ENCODE measurements at regions of chr5 and their contacts with region 1.

Region 1: DNA sequence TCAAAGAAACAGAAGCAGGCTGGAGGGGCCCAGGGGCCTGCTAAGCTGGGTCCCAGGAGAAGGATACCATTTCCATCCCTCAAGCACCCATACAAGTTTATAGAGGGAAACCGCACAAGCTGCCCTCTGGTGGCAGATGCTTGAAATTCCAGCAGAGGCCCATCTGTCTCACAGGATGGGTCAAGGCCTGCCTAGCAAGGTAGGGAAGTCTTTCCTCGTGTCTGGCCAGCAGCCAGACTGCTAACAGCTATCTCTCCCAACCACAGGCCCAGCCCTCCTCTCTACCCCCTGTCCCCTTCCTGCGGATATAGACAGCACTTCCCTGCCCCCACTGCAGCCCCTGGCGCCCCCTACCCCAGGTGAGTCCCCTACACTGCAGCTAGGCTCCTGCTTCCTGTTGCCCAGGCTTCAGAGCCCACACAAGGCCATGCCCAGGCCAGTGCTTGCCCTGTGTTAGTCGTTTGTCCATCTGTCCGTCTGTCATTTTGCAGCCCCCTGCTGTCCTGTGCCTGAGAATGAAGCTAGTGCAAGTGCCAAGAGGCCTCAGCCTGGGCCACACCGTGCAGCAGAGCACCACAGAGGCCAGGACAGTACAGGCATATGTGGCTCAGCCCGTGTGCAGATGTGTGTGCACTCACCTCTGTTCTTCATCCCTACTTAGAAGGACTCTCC is 26.2 kb downstream of the TCF7 start:
- DNase-seq: peak; percentile 75
- ATAC-seq: peak; percentile 53
- H3K4me3 Mint-ChIP-seq: no peak overlapping the region
- H3K27ac Mint-ChIP-seq: no peak overlapping the region
- H3K4me1 Mint-ChIP-seq: peaks cover 32% of the 10 kb centered on the region
- H3K27me3 Mint-ChIP-seq: peaks cover 8% of the 10 kb centered on the region

Region 2: DNA sequence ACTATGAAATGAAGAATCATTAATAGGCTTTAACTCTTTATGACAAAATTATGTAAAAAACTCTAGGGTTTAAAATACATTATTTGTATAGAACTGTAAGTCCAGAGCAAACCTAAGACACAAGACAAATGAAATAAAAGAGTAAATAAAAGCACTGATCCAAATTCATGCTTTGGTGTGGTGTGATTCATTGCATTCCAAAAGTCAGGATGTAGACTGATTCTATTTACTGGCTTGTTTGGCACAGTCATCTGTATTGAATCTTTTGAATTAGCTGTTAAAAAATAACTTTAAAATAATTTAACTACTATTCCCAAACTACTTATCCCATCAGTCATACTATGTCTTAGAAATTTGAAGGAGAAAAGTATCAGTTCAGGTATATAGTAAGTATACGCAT is 1435.8 kb before region 1 on chr5:
- CTCF ChIA-PET with region 1: no interaction called
- DNase-seq: no peak
- ATAC-seq: no peak
- H3K4me3 Mint-ChIP-seq: no peak overlapping the region
- H3K27ac Mint-ChIP-seq: peak overlapping the region; percentile 70
- H3K4me1 Mint-ChIP-seq: peaks cover 27% of the 10 kb centered on the region
- H3K27me3 Mint-ChIP-seq: no peaks in the 10 kb centered on the region

Region 3: GRCh38 chr5:133868946-133869518 is 271.6 kb before region 1 on chr5:
- CTCF ChIA-PET with region 1: no interaction called
- DNase-seq: peak; percentile 86
- ATAC-seq: peak; percentile 81
- H3K4me3 Mint-ChIP-seq: no peak overlapping the region
- H3K27ac Mint-ChIP-seq: no peak overlapping the region
- H3K4me1 Mint-ChIP-seq: peaks cover 7% of the 10 kb centered on the region
- H3K27me3 Mint-ChIP-seq: peaks cover 19% of the 10 kb centered on the region

Region 4: GRCh38 chr5:134113902-134114875 is 26.5 kb before region 1 on chr5 and contains the start of gene TCF7:
- CTCF ChIA-PET with region 1: interaction called, 27 read pairs
- DNase-seq: peak; percentile 63
- ATAC-seq: peak; percentile 85
- H3K4me3 Mint-ChIP-seq: peak within 1 kb of the TSS; percentile 68
- H3K27ac Mint-ChIP-seq: peak within 1 kb of the TSS; percentile 35
- H3K4me1 Mint-ChIP-seq: peaks cover 30% of the 10 kb centered on the region
- H3K27me3 Mint-ChIP-seq: peaks cover 84% of the 10 kb centered on the region
- total RNA-seq, gene TCF7: 7.0 to 7.9 TPM

Region 5: GRCh38 chr5:134119720-134120119 is 20.9 kb before region 1 on chr5:
- CTCF ChIA-PET with region 1: interaction called, 27 read pairs
- DNase-seq: no peak
- ATAC-seq: no peak
- H3K4me3 Mint-ChIP-seq: no peak overlapping the region
- H3K27ac Mint-ChIP-seq: no peak overlapping the region
- H3K4me1 Mint-ChIP-seq: peaks cover 32% of the 10 kb centered on the region
- H3K27me3 Mint-ChIP-seq: peaks cover 73% of the 10 kb centered on the region

Region 6: DNA sequence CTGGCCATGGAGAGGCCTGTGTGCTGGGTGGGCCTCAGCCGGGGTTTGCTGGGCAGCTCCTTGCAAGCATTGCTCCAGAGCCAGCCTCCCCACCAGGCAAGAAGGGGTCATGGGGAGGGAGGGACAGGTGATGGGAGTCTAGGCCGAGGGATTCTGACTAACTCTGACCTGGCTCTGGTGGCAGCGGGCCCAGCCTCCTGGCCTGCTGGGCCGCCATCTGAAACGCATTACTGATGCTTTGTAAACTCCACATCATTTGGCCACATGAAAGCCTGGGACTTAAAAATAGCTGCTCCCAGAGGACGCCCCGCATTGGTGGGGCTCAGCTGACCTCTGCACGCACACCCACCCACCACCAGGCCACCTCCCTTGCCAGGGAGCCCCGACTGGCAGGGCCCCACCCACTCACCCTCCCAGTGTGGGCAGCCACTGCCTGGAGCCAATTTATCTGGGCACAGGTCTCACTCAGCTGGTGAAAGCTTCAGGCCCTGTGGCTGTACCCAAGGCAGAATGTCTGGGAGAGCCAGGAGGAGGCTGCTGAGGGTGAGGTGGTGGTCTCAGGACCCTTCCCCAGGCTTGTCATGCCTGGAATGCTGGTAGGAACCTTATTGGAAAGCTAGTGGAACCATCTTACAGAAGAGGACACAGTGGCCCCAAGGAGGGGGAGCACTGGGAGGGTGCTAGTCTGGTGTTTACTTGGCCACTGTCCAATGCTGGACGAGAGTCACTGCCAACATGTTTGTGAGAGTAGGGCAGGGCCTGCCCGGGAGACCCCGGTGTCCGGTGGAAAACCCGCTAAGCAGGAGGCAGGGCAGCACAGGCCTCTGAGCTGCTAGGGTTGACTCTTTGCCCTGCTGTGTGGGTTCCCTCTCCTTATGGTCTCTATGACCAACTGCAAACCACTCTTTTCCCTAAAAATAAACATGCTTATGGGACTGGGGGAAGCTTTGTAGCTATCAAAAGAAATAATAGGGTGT is 15.3 kb before region 1 on chr5:
- CTCF ChIA-PET with region 1: interaction called, 44 read pairs
- DNase-seq: no peak
- ATAC-seq: no peak
- H3K4me3 Mint-ChIP-seq: no peak overlapping the region
- H3K27ac Mint-ChIP-seq: no peak overlapping the region
- H3K4me1 Mint-ChIP-seq: peaks cover 46% of the 10 kb centered on the region
- H3K27me3 Mint-ChIP-seq: peaks cover 72% of the 10 kb centered on the region

Region 7: GRCh38 chr5:134153657-134154056 is 13.0 kb after region 1 on chr5:
- CTCF ChIA-PET with region 1: interaction called, 43 read pairs
- DNase-seq: no peak
- ATAC-seq: no peak
- H3K4me3 Mint-ChIP-seq: no peak overlapping the region
- H3K27ac Mint-ChIP-seq: no peak overlapping the region
- H3K4me1 Mint-ChIP-seq: peaks cover 12% of the 10 kb centered on the region
- H3K27me3 Mint-ChIP-seq: no peaks in the 10 kb centered on the region

Measured in activated CD8-positive, alpha-beta memory T cell treated with anti-CD3 and anti-CD28 coated beads, Interleukin-2, amount 10 ng/mL, durations not matched to agents 7 days and 5 days (primary cell).